Activated CD8-positive, alpha-beta memory T cell treated with anti-CD3 and anti-CD28 coated beads, Interleukin-2, amount 10 ng/mL, durations not matched to agents 7 days and 5 days (primary cell): ENCODE measurements at regions of chr1 and their contacts with region 1.

Region 1: GRCh38 chr1:224375059-224375458 is 18.4 kb downstream of the CNIH4 start:
- DNase-seq: peak; percentile 59
- ATAC-seq: peak; percentile 56
- H3K4me3 Mint-ChIP-seq: peak overlapping the region; percentile 1
- H3K27ac Mint-ChIP-seq: peak overlapping the region; percentile 84
- H3K4me1 Mint-ChIP-seq: peaks cover 69% of the 10 kb centered on the region
- H3K27me3 Mint-ChIP-seq: no peaks in the 10 kb centered on the region

Region 2: DNA sequence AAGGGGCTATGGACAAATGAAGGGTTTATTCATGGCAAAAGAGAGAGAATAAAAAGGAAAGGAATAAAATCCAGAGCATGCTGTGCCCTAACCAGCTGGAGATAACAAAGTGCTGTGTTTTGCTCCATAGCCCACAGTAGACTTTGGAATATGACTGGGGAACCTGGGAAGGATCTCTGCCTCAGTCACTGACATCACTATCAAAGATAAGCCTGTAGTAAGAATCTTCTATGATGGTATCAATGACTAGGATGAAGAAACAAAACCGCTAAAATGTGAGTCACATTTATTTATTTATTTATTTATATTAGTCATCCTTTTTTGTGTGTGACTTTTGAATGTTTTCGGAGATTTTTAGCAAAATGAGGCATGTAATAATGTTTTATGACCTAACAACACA is 101.4 kb before region 1 on chr1:
- CTCF ChIA-PET with region 1: no interaction called
- DNase-seq: no peak
- ATAC-seq: no peak
- H3K4me3 Mint-ChIP-seq: no peak overlapping the region
- H3K27ac Mint-ChIP-seq: no peak overlapping the region
- H3K4me1 Mint-ChIP-seq: peaks cover 2% of the 10 kb centered on the region
- H3K27me3 Mint-ChIP-seq: no peaks in the 10 kb centered on the region

Region 3: GRCh38 chr1:224356685-224357625 is 18.1 kb before region 1 on chr1 and contains the start of gene CNIH4:
- CTCF ChIA-PET with region 1: interaction called, 17 read pairs
- DNase-seq: peak; percentile 96
- ATAC-seq: peak; percentile 99
- H3K4me3 Mint-ChIP-seq: peak within 1 kb of the TSS; percentile 81
- H3K27ac Mint-ChIP-seq: peak within 1 kb of the TSS; percentile 85
- H3K4me1 Mint-ChIP-seq: peaks cover 46% of the 10 kb centered on the region
- H3K27me3 Mint-ChIP-seq: no peaks in the 10 kb centered on the region
- total RNA-seq, gene CNIH4: 45.5 to 46.2 TPM